K562 (cell line): ENCODE measurements at regions of chr7 and their contacts with region 1.

Region 1: DNA sequence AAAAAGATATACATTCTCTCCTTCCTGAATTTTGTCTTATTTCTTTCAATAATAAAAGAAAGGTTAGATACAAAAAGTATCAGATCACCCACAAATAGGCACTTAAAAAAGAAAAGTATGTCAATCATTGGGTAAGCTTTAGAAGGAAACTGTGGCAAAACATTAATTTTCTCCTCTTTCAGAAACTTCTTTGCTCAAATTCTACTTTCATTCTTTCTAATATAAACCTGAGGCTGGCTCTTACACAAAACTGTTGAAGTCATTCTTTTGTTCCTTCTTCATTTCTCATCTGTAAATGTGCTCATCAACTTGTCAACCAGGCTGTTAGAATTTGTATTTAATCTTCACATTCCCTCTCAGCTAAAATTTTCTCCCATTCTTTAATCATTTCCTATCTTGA is 124.6 kb downstream of the LRRN3 start:
- DNase-seq: no peak
- ATAC-seq: no peak
- H3K4me3 ChIP-seq: no peak overlapping the region
- H3K27ac ChIP-seq: no peak overlapping the region
- H3K4me1 ChIP-seq: peaks cover 0 to 6% of the 10 kb centered on the region in 2 experiments; a peak in 1 of 5 replicates
- H3K27me3 ChIP-seq: no peaks in the 10 kb centered on the region
- CTCF ChIP-seq: no peak
- EP300 ChIP-seq: no peak
- POLR2A ChIP-seq: no peak
- RAD21 ChIP-seq: no peak

Region 2: DNA sequence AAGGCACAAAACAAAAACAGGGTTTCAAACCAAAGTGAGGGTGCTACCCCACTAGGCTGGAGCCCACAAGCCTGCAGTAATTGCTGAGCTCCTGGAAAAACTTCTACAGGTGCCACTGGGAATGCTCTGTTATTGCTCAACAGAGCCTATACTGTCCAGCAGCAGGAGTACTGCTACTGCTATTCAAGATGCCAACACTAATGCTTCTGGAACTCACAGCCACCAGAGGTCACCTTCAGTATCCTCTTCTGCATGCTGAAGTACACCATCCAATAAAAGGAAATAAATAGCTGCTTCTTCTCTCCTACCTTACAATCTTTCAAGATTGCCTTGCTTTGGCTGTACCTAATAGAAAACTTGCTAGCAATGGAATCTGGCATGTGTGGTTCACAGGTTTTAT is 97.4 kb after region 1 on chr7:
- CTCF ChIA-PET with region 1: no interaction called
- POLR2A ChIA-PET with region 1: no interaction called
- in situ Hi-C with region 1: loop called (anchors 5 kb)
- intact Hi-C with region 1: loop called (anchors 5 kb)
- DNase-seq: peak in 1 of 4 experiments; percentile 23
- ATAC-seq: peak; percentile 82
- H3K4me3 ChIP-seq: no peak overlapping the region
- H3K27ac ChIP-seq: no peak overlapping the region
- H3K4me1 ChIP-seq: peaks cover 0 to 9% of the 10 kb centered on the region in 2 experiments; a peak in 2 of 5 replicates
- H3K27me3 ChIP-seq: no peaks in the 10 kb centered on the region
- CTCF ChIP-seq: peak in 2 of 3 experiments; percentile 14 to 25; a peak in 2 of 6 replicates
- EP300 ChIP-seq: no peak
- POLR2A ChIP-seq: no peak
- RAD21 ChIP-seq: no peak; a peak in 1 of 4 replicates